GM12878 (cell line): ENCODE measurements at regions of chr11 and their contacts with region 1.

Region 1: DNA sequence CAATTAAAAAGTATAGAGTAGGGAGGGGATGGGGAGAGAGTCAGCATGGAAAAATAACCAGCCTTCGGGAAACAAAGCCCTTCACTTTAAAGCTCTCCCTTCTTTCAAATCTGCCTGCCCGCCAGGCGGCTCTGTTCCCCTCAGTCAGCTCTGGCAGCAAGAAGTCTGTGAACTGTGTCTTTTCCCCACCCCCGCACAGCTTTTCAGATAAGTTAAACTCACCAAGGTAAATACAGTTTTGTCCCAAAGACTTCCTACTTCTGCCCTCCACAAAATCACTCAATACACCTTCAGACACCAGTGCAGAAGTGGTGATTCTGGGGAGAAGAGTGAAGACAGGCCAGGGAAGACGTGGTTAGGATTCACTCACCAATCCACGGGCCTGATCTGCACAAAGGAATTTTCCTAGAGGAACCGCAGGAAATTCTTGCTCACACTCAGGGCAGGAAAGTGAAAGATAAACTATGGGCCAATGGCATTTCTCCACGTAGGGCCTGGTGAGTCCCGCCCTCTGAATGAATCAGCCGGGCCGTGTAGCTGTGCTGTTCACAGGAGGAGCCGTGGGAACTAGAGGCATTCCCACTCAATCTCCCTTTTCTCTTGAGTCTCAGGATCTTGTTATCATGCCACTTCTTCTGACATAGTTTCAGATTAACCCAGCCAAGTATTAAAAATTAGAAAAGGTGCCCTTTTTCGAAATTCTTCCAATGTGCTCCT is at the start of gene TRIM5:
- DNase-seq: peak; percentile 86
- ATAC-seq: peak; percentile 87
- H3K4me3 ChIP-seq: peak within 1 kb of the TSS; percentile 87
- H3K27ac ChIP-seq: peak within 1 kb of the TSS; percentile 94
- H3K4me1 ChIP-seq: peaks cover 8% of the 10 kb centered on the region
- H3K27me3 ChIP-seq: no peaks in the 10 kb centered on the region
- CTCF ChIP-seq: peak; percentile 74 to 78 (median 76)
- EP300 ChIP-seq: peak in 1 of 2 experiments; percentile 15; a peak in 1 of 4 replicates
- POLR2A ChIP-seq: peak; percentile 60; the same call in 1 of the 2 replicates
- RAD21 ChIP-seq: peak; percentile 80
- polyA plus RNA-seq, gene TRIM5: 20.0 to 21.8 TPM

Region 2: GRCh38 chr11:5476184-5476819 is 208.5 kb before region 1 on chr11:
- CTCF ChIA-PET with region 1: interaction called, 11 read pairs
- POLR2A ChIA-PET with region 1: no interaction called
- RAD21 ChIA-PET with region 1: interaction called, 9 read pairs
- SMC1A ChIA-PET with region 1: no interaction called
- in situ Hi-C with region 1: no loop called
- intact Hi-C with region 1: no loop called
- DNase-seq: no peak
- ATAC-seq: peak; percentile 90
- H3K4me3 ChIP-seq: no peak overlapping the region
- H3K27ac ChIP-seq: no peak overlapping the region
- H3K4me1 ChIP-seq: no peaks in the 10 kb centered on the region
- H3K27me3 ChIP-seq: no peaks in the 10 kb centered on the region; a peak in 1 of 4 replicates
- CTCF ChIP-seq: peak; percentile 69 to 83 (median 75)
- EP300 ChIP-seq: no peak
- POLR2A ChIP-seq: no peak
- RAD21 ChIP-seq: peak; percentile 72

Region 3: GRCh38 chr11:5605849-5606248 is 79.0 kb before region 1 on chr11:
- CTCF ChIA-PET with region 1: interaction called, 19 read pairs
- POLR2A ChIA-PET with region 1: no interaction called
- RAD21 ChIA-PET with region 1: interaction called, 13 read pairs
- SMC1A ChIA-PET with region 1: interaction called, 21 read pairs
- in situ Hi-C with region 1: no loop called
- intact Hi-C with region 1: no loop called
- DNase-seq: no peak
- ATAC-seq: peak; percentile 77
- H3K4me3 ChIP-seq: no peak overlapping the region
- H3K27ac ChIP-seq: no peak overlapping the region
- H3K4me1 ChIP-seq: no peaks in the 10 kb centered on the region; the same call in 1 of the 2 replicates
- H3K27me3 ChIP-seq: no peaks in the 10 kb centered on the region
- CTCF ChIP-seq: peak; percentile 23 to 45 (median 32); a peak in 4 of 6 replicates
- EP300 ChIP-seq: no peak
- POLR2A ChIP-seq: no peak
- RAD21 ChIP-seq: 0 out of 2 replicates have a peak, but pooled peaks have one; percentile 18

Region 4: DNA sequence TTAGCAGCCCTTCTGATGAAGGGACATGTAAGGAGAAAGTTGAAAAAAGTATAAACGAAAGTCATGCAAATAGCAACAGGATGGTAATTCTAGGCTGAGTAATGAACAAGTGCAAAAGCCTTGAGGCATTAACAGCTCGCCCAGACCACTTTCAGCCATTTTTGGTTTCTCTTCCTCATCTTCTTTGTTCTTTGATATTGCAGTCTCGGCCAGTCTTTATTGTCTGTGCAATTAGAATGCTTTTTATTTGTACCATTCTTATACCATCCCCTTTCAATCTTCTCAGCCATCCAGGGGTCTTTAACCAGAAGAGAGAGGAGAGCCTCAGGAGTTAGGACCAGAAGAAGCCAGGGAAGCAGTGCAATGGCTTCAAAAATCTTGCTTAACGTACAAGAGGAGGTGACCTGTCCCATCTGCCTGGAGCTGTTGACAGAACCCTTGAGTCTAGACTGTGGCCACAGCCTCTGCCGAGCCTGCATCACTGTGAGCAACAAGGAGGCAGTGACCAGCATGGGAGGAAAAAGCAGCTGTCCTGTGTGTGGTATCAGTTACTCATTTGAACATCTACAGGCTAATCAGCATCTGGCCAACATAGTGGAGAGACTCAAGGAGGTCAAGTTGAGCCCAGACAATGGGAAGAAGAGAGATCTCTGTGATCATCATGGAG is 52.7 kb before region 1 on chr11:
- CTCF ChIA-PET with region 1: interaction called, 25 read pairs
- POLR2A ChIA-PET with region 1: interaction called, 38 read pairs
- RAD21 ChIA-PET with region 1: interaction called, 27 read pairs
- SMC1A ChIA-PET with region 1: interaction called, 45 read pairs
- in situ Hi-C with region 1: no loop called
- intact Hi-C with region 1: no loop called
- DNase-seq: peak; percentile 85
- ATAC-seq: peak; percentile 95
- H3K4me3 ChIP-seq: peak overlapping the region; percentile 63
- H3K27ac ChIP-seq: peak overlapping the region; percentile 95
- H3K4me1 ChIP-seq: peaks cover 15% of the 10 kb centered on the region
- H3K27me3 ChIP-seq: no peaks in the 10 kb centered on the region
- CTCF ChIP-seq: no peak
- EP300 ChIP-seq: peak; percentile 56 to 85
- POLR2A ChIP-seq: peak; percentile 67
- RAD21 ChIP-seq: no peak

Region 5: DNA sequence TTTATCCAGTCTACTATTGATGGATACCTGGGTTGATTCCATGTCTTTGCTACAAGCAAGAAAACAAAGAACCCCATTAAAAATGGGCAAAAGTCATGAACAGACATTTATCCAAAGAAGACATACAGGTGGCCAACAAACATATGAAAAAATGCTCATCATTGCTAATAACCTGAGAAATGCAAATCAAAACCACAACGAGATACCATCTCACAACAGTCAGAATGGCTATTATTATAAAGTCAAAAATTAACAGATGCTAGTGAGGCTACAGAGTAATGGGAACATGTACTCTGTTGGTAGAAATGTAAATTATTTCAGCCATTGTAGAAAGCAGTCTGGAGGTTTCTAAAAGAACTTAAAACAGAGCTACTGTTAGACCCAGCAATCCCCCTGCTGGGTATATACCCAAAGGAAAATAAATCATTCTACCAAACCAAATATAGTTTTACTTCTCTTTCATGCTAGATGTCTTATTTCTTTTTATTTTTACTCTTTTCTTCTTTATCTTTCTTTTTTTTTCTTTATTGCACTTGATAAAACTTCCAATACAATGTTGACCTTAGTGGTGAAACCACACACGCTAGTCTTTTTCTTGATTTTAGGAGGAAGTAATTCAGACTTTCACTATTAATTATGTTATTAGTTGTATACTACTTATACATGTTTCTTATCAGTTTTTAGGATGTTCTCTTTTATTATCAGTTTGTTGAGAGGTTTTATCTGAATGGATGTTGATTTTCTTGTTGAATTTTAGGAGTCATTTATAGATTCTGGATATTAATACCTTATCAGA is 19.1 kb after region 1 on chr11:
- CTCF ChIA-PET with region 1: interaction called, 37 read pairs
- POLR2A ChIA-PET with region 1: interaction called, 58 read pairs
- RAD21 ChIA-PET with region 1: interaction called, 61 read pairs
- SMC1A ChIA-PET with region 1: interaction called, 96 read pairs
- in situ Hi-C with region 1: no loop called
- intact Hi-C with region 1: no loop called
- DNase-seq: no peak
- ATAC-seq: peak; percentile 77
- H3K4me3 ChIP-seq: no peak overlapping the region
- H3K27ac ChIP-seq: no peak overlapping the region; the same call in 1 of the 2 replicates
- H3K4me1 ChIP-seq: peaks cover 3% of the 10 kb centered on the region; the same call in 1 of the 2 replicates
- H3K27me3 ChIP-seq: no peaks in the 10 kb centered on the region
- CTCF ChIP-seq: no peak
- EP300 ChIP-seq: no peak
- POLR2A ChIP-seq: no peak
- RAD21 ChIP-seq: no peak

Region 6: GRCh38 chr11:5808500-5809121 is 123.8 kb after region 1 on chr11 and contains the start of gene OR52N2:
- CTCF ChIA-PET with region 1: interaction called, 21 read pairs
- POLR2A ChIA-PET with region 1: interaction called, 3 read pairs
- RAD21 ChIA-PET with region 1: interaction called, 23 read pairs
- SMC1A ChIA-PET with region 1: interaction called, 19 read pairs
- in situ Hi-C with region 1: no loop called
- intact Hi-C with region 1: loop called (anchors 1 kb)
- DNase-seq: peak; percentile 53
- ATAC-seq: peak; percentile 98
- H3K4me3 ChIP-seq: peak within 1 kb of the TSS; percentile 68
- H3K27ac ChIP-seq: no peak within 1 kb of the TSS
- H3K4me1 ChIP-seq: no peaks in the 10 kb centered on the region
- H3K27me3 ChIP-seq: no peaks in the 10 kb centered on the region
- CTCF ChIP-seq: peak; percentile 78 to 92 (median 83)
- EP300 ChIP-seq: no peak
- POLR2A ChIP-seq: no peak
- RAD21 ChIP-seq: peak; percentile 97
- polyA plus RNA-seq, gene OR52N2: 0.24 to 0.40 TPM

Region 7: GRCh38 chr11:5922749-5923426 is 238.1 kb after region 1 on chr11:
- CTCF ChIA-PET with region 1: no interaction called
- POLR2A ChIA-PET with region 1: no interaction called
- RAD21 ChIA-PET with region 1: no interaction called
- SMC1A ChIA-PET with region 1: no interaction called
- in situ Hi-C with region 1: no loop called
- intact Hi-C with region 1: no loop called
- DNase-seq: peak; percentile 48
- ATAC-seq: peak; percentile 96
- H3K4me3 ChIP-seq: no peak overlapping the region
- H3K27ac ChIP-seq: no peak overlapping the region; the same call in 1 of the 2 replicates
- H3K4me1 ChIP-seq: peaks cover 3% of the 10 kb centered on the region; the same call in 1 of the 2 replicates
- H3K27me3 ChIP-seq: no peaks in the 10 kb centered on the region
- CTCF ChIP-seq: no peak
- EP300 ChIP-seq: no peak
- POLR2A ChIP-seq: no peak
- RAD21 ChIP-seq: no peak